CD8-positive, alpha-beta T cell (primary cell): ENCODE measurements at regions of chr9 and their contacts with region 1.

Region 1: DNA sequence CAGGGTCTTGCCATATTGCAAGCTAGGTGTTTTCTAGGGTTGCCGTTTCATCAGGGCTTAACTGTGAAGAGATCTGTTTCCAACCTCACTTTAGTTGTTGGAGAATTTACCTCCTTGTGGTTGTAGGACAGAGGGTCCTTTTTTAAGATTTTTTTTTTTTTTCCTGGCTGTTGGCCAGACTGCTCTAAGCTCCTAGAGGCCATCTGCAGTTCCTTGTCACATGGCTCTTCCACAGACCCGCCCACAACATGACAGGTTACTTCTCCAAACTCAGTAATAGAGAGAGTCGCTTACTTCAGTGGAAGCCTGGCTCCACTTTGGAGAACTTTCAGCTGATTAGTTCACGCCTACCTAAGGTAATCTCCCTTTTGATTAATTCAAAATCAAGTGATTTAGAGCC is 543.7 kb downstream of the DMRTA1 start:
- DNase-seq: no peak
- ATAC-seq: no peak
- H3K4me3 ChIP-seq: no peak overlapping the region
- H3K4me3 Mint-ChIP-seq: no peak overlapping the region
- H3K27ac ChIP-seq: no peak overlapping the region
- H3K27ac Mint-ChIP-seq: no peak overlapping the region
- H3K4me1 ChIP-seq: no peaks in the 10 kb centered on the region
- H3K4me1 Mint-ChIP-seq: no peaks in the 10 kb centered on the region
- H3K27me3 ChIP-seq: no peaks in the 10 kb centered on the region
- H3K27me3 Mint-ChIP-seq: no peaks in the 10 kb centered on the region
- CTCF ChIP-seq: no peak

Region 2: GRCh38 chr9:23006127-23006526 is 15.8 kb after region 1 on chr9:
- CTCF ChIA-PET with region 1: no interaction called
- POLR2A ChIA-PET with region 1: no interaction called
- intact Hi-C with region 1: loop called in 1 of 2 experiments (anchors 1 kb)
- DNase-seq: no peak
- ATAC-seq: no peak
- H3K4me3 ChIP-seq: no peak overlapping the region
- H3K4me3 Mint-ChIP-seq: no peak overlapping the region
- H3K27ac ChIP-seq: no peak overlapping the region
- H3K27ac Mint-ChIP-seq: no peak overlapping the region
- H3K4me1 ChIP-seq: no peaks in the 10 kb centered on the region
- H3K4me1 Mint-ChIP-seq: no peaks in the 10 kb centered on the region
- H3K27me3 ChIP-seq: no peaks in the 10 kb centered on the region
- H3K27me3 Mint-ChIP-seq: no peaks in the 10 kb centered on the region
- CTCF ChIP-seq: no peak

Region 3: DNA sequence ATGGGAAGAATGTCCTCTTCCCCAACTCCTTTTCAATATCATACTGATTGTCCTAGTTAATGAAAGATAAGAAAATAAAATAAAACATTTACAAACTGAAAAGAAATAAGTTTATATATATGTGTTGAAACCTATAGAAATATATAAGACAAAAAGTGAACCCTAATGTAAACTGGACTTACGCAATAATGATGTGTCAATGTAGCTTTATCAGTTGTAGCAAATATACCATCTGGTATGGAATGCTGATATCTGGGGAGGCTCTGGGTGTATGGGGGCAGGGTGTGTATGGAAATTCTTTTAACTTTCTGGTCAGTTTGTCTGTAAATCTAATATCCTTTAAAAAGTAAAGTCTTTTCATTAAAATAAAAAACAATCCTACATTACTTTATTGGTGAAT is 60.2 kb after region 1 on chr9:
- CTCF ChIA-PET with region 1: no interaction called
- POLR2A ChIA-PET with region 1: no interaction called
- intact Hi-C with region 1: no loop called
- DNase-seq: no peak
- ATAC-seq: no peak
- H3K4me3 ChIP-seq: no peak overlapping the region
- H3K4me3 Mint-ChIP-seq: no peak overlapping the region
- H3K27ac ChIP-seq: no peak overlapping the region
- H3K27ac Mint-ChIP-seq: no peak overlapping the region
- H3K4me1 ChIP-seq: no peaks in the 10 kb centered on the region
- H3K4me1 Mint-ChIP-seq: no peaks in the 10 kb centered on the region
- H3K27me3 ChIP-seq: no peaks in the 10 kb centered on the region
- H3K27me3 Mint-ChIP-seq: no peaks in the 10 kb centered on the region
- CTCF ChIP-seq: no peak